HepG2 (cell line): ENCODE measurements at regions of chr12 and their contacts with region 1.

Region 1: GRCh38 chr12:96578526-96579125 is 89.2 kb downstream of the CFAP54 start:
- DNase-seq: peak; percentile 48
- ATAC-seq: peak; percentile 71
- H3K4me3 ChIP-seq: no peak overlapping the region
- H3K27ac ChIP-seq: no peak overlapping the region
- H3K4me1 ChIP-seq: no peaks in the 10 kb centered on the region
- H3K27me3 ChIP-seq: no peaks in the 10 kb centered on the region
- CTCF ChIP-seq: peak; percentile 70
- EP300 ChIP-seq: no peak
- POLR2A ChIP-seq: no peak
- RAD21 ChIP-seq: no peak

Region 2: GRCh38 chr12:95446506-95446900 is 1132.1 kb before region 1 on chr12:
- CTCF ChIA-PET with region 1: no interaction called
- POLR2A ChIA-PET with region 1: no interaction called
- in situ Hi-C with region 1: no loop called
- intact Hi-C with region 1: no loop called
- DNase-seq: peak; percentile 25
- ATAC-seq: peak; percentile 98
- H3K4me3 ChIP-seq: peak overlapping the region; percentile 55 to 77 (median 61)
- H3K27ac ChIP-seq: no peak overlapping the region
- H3K4me1 ChIP-seq: peaks cover 26% of the 10 kb centered on the region
- H3K27me3 ChIP-seq: peaks cover 0 to 18% of the 10 kb centered on the region in 2 experiments; a peak in 4 of 5 replicates
- CTCF ChIP-seq: no peak
- EP300 ChIP-seq: no peak
- POLR2A ChIP-seq: no peak
- RAD21 ChIP-seq: no peak

Region 3: GRCh38 chr12:97308576-97309198 is 730.1 kb after region 1 on chr12:
- CTCF ChIA-PET with region 1: interaction called, 6 read pairs
- POLR2A ChIA-PET with region 1: no interaction called
- in situ Hi-C with region 1: loop called (anchors 25 kb)
- intact Hi-C with region 1: no loop called
- DNase-seq: peak; percentile 39
- ATAC-seq: no peak
- H3K4me3 ChIP-seq: no peak overlapping the region
- H3K27ac ChIP-seq: no peak overlapping the region
- H3K4me1 ChIP-seq: no peaks in the 10 kb centered on the region
- H3K27me3 ChIP-seq: no peaks in the 10 kb centered on the region
- CTCF ChIP-seq: peak; percentile 61
- EP300 ChIP-seq: no peak
- POLR2A ChIP-seq: no peak
- RAD21 ChIP-seq: no peak; the same call in 1 of the 2 replicates

Region 4: GRCh38 chr12:97960754-97961608 is 1382.4 kb after region 1 on chr12:
- CTCF ChIA-PET with region 1: no interaction called
- POLR2A ChIA-PET with region 1: no interaction called
- in situ Hi-C with region 1: no loop called
- intact Hi-C with region 1: loop called (anchors 10 kb)
- DNase-seq: peak; percentile 14
- ATAC-seq: peak; percentile 89
- H3K4me3 ChIP-seq: no peak overlapping the region
- H3K27ac ChIP-seq: no peak overlapping the region
- H3K4me1 ChIP-seq: no peaks in the 10 kb centered on the region
- H3K27me3 ChIP-seq: no peaks in the 10 kb centered on the region
- CTCF ChIP-seq: peak; percentile 59
- EP300 ChIP-seq: no peak
- POLR2A ChIP-seq: no peak
- RAD21 ChIP-seq: peak; percentile 15; the same call in 1 of the 2 replicates

Region 5: GRCh38 chr12:98397316-98398105 is 1818.9 kb after region 1 on chr12:
- CTCF ChIA-PET with region 1: no interaction called
- POLR2A ChIA-PET with region 1: no interaction called
- in situ Hi-C with region 1: no loop called
- intact Hi-C with region 1: loop called (anchors 1 kb)
- DNase-seq: peak; percentile 68
- ATAC-seq: peak; percentile 94
- H3K4me3 ChIP-seq: peak overlapping the region; percentile 50 to 60 (median 54)
- H3K27ac ChIP-seq: no peak overlapping the region
- H3K4me1 ChIP-seq: peaks cover 31% of the 10 kb centered on the region
- H3K27me3 ChIP-seq: no peaks in the 10 kb centered on the region
- CTCF ChIP-seq: peak; percentile 93
- EP300 ChIP-seq: no peak
- POLR2A ChIP-seq: no peak
- RAD21 ChIP-seq: peak; percentile 78